ENCODE measurements at regions of chr1 and their contacts with region 1.

Region 1: DNA sequence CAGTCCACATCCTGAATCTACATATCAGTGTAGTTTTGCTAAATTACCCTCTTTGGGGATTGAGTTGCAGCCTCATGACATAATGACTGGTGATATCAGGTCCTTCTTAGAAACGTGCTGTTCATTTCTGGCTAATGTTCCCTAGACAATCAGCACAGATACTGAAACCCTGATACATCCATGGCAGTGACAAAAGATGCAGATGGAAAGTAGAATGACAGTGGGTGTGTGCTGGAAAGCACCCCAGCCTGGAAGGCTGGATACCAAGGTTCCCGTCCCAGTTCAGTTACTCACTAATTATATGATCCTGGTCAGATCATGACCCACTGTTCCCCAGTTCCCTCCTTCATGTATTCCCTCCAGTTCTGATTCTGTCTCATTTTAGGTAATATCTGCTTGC is 198.2 kb upstream of the FGGY start:
- DNase-seq: no peak
- H3K4me3 Mint-ChIP-seq: no peak overlapping the region
- H3K27ac Mint-ChIP-seq: no peak overlapping the region
- H3K4me1 Mint-ChIP-seq: no peaks in the 10 kb centered on the region
- H3K27me3 Mint-ChIP-seq: no peaks in the 10 kb centered on the region

Region 2: GRCh38 chr1:59124166-59124565 is 25.5 kb after region 1 on chr1:
- CTCF ChIA-PET with region 1: no interaction called
- POLR2A ChIA-PET with region 1: no interaction called
- intact Hi-C with region 1: loop called (anchors 1 kb)
- DNase-seq: no peak
- H3K4me3 Mint-ChIP-seq: no peak overlapping the region
- H3K27ac Mint-ChIP-seq: no peak overlapping the region
- H3K4me1 Mint-ChIP-seq: peaks cover 11% of the 10 kb centered on the region
- H3K27me3 Mint-ChIP-seq: peaks cover 9% of the 10 kb centered on the region

Region 3: GRCh38 chr1:59143133-59143487 is 44.5 kb after region 1 on chr1:
- CTCF ChIA-PET with region 1: no interaction called
- POLR2A ChIA-PET with region 1: no interaction called
- intact Hi-C with region 1: no loop called
- DNase-seq: no peak
- H3K4me3 Mint-ChIP-seq: no peak overlapping the region
- H3K27ac Mint-ChIP-seq: no peak overlapping the region
- H3K4me1 Mint-ChIP-seq: peaks cover 23% of the 10 kb centered on the region
- H3K27me3 Mint-ChIP-seq: no peaks in the 10 kb centered on the region

Measured in activated CD4-positive, alpha-beta memory T cell treated with anti-CD3 and anti-CD28 coated beads for 36 hours (primary cell).